GM23248 (cell line): ENCODE measurements at regions of chr1 and their contacts with region 1.

Region 1: GRCh38 chr1:206734499-206735142 is 36.0 kb upstream of the IL19 start:
- DNase-seq: peak; percentile 64
- H3K4me3 ChIP-seq: no peak overlapping the region
- H3K27ac ChIP-seq: no peak overlapping the region
- H3K4me1 ChIP-seq: no peaks in the 10 kb centered on the region
- H3K27me3 ChIP-seq: no peaks in the 10 kb centered on the region

Region 2: DNA sequence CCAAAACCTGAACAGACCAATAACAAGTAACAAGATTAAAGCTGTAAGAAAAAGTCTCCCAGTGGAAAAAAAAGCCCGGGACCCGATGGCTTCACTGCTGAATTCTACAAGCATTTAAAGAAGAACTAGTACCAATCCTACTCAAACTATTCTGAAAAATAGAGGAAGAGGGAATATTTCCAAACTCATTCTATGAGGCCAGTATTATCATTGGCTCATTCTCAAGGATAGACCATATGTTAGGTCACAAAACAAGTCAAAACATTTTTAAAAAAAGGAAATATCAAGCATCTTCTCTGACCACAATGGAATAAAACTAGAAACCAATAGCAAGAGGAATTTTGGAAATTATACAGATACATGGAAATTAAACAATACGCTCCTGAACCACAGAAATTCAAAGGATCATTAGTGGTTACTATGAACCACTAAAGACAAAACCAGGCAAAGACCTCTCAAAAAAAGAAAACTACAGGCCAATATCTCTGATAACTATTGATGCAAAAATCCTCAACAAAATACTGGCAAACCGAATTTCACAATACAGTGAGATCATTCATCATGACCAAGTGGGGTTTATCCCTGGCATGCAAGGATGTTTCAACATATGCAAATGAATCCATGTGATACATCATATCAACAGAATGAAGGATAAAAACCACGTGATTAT is 116.9 kb after region 1 on chr1:
- in situ Hi-C with region 1: no loop called
- DNase-seq: peak; percentile 84
- H3K4me3 ChIP-seq: no peak overlapping the region
- H3K27ac ChIP-seq: peak overlapping the region; percentile 58
- H3K4me1 ChIP-seq: peaks cover 12% of the 10 kb centered on the region; the same call in 1 of the 2 replicates
- H3K27me3 ChIP-seq: no peaks in the 10 kb centered on the region

Region 3: GRCh38 chr1:206912445-206913095 is 177.9 kb after region 1 on chr1:
- in situ Hi-C with region 1: loop called (anchors 5 kb)
- DNase-seq: peak; percentile 84
- H3K4me3 ChIP-seq: no peak overlapping the region
- H3K27ac ChIP-seq: no peak overlapping the region
- H3K4me1 ChIP-seq: no peaks in the 10 kb centered on the region; the same call in 1 of the 2 replicates
- H3K27me3 ChIP-seq: peaks cover 7% of the 10 kb centered on the region; the same call in 1 of the 2 replicates

Region 4: GRCh38 chr1:207004981-207005830 is 270.6 kb after region 1 on chr1:
- in situ Hi-C with region 1: no loop called
- DNase-seq: peak; percentile 87
- H3K4me3 ChIP-seq: no peak overlapping the region
- H3K27ac ChIP-seq: no peak overlapping the region
- H3K4me1 ChIP-seq: peaks cover 22% of the 10 kb centered on the region
- H3K27me3 ChIP-seq: no peaks in the 10 kb centered on the region